ENCODE measurements at regions of chr14 and their contacts with region 1.

Region 1: DNA sequence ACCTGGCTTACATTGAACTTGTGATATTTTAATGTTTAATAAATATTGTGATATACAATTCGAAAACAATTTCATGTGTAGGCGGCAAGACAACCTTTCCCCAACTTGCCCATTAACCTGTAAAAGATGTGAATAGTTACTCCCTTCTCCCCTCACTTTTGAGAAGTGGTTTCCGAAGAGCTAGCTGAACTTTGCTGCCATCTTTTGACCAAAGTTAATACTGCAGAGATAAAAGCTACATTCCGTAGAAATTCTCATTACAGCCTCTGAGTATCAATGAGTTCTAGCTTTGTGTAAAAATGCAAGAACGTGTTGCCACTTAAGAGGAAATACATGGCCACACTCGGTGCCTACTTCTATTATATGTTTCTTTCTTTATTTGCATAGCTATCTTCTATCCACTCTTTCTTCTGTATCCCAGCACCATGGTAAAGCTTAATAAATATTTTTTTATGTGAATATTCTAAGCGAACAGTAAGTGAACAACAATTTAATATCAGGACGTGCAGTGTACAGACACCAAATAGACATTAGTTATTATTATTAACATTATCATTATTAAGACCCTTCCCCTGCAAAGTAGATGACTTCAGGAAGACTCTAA is 105.1 kb upstream of the TMEM260 start:
- DNase-seq: no peak
- ATAC-seq: peak in 2 of 8 donors; percentile 16 to 56
- H3K4me3 ChIP-seq: no peak overlapping the region
- H3K27ac ChIP-seq: no peak overlapping the region
- H3K4me1 ChIP-seq: no peaks in the 10 kb centered on the region
- H3K27me3 ChIP-seq: peaks cover 0 to 6% (median 0%) of the 10 kb centered on the region in 7 donors
- CTCF ChIP-seq: peak; percentile 71 to 92 (median 84)

Region 2: DNA sequence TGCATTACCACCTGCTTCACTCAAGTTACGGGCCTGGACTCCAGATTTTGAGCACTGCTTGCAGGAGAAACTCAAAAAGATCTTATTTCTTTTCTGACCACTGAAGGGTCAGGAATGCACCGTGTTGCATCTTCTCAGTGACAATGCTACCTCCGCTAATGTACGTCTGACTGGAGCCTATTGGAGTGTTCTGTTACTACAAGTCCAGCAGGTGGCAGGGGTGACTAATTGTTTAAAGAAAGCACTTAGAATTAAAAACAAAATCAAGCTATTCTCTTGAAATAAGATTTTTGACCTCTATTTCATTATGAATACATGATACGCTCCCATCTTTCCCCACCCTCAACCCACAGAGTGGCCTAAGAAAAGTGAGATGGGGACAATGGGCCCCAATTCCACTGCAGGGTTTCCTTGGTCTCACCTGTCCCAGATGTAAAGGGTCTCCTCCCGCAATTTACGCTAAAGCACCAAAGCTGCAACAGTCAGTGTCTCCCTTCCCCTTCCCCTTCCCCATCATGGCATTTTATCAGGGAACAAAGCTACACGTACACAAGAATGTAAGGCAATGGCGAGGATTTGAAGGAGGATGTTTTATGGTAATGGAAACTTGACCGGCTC is 1036.3 kb before region 1 on chr14:
- intact Hi-C with region 1: loop called in 6 of 10 experiments (anchors 5 to 10 kb)
- DNase-seq: peak in 1 of 2 donors; percentile 20
- ATAC-seq: peak in 5 of 8 donors; percentile 25 to 63 (median 52)
- H3K4me3 ChIP-seq: no peak overlapping the region
- H3K27ac ChIP-seq: no peak overlapping the region
- H3K4me1 ChIP-seq: peaks cover 0 to 9% (median 0%) of the 10 kb centered on the region in 9 donors
- H3K27me3 ChIP-seq: peaks cover 0 to 26% (median 5%) of the 10 kb centered on the region in 7 donors
- CTCF ChIP-seq: peak in 8 of 9 donors; percentile 23 to 67 (median 55)

Region 3: GRCh38 chr14:55707365-55707804 is 767.1 kb before region 1 on chr14:
- intact Hi-C with region 1: loop called (anchors 5 to 10 kb)
- DNase-seq: no peak
- ATAC-seq: peak in 3 of 8 donors; percentile 47 to 56 (median 47)
- H3K4me3 ChIP-seq: no peak overlapping the region
- H3K27ac ChIP-seq: no peak overlapping the region
- H3K4me1 ChIP-seq: peaks cover 0 to 13% (median 5%) of the 10 kb centered on the region in 9 donors
- H3K27me3 ChIP-seq: no peaks in the 10 kb centered on the region
- CTCF ChIP-seq: peak; percentile 43 to 77 (median 66)